Activated CD4-positive, alpha-beta T cell treated with anti-CD3 and anti-CD28 coated beads for 36 hours (primary cell): ENCODE measurements at regions of chr2 and their contacts with region 1.

Region 1: DNA sequence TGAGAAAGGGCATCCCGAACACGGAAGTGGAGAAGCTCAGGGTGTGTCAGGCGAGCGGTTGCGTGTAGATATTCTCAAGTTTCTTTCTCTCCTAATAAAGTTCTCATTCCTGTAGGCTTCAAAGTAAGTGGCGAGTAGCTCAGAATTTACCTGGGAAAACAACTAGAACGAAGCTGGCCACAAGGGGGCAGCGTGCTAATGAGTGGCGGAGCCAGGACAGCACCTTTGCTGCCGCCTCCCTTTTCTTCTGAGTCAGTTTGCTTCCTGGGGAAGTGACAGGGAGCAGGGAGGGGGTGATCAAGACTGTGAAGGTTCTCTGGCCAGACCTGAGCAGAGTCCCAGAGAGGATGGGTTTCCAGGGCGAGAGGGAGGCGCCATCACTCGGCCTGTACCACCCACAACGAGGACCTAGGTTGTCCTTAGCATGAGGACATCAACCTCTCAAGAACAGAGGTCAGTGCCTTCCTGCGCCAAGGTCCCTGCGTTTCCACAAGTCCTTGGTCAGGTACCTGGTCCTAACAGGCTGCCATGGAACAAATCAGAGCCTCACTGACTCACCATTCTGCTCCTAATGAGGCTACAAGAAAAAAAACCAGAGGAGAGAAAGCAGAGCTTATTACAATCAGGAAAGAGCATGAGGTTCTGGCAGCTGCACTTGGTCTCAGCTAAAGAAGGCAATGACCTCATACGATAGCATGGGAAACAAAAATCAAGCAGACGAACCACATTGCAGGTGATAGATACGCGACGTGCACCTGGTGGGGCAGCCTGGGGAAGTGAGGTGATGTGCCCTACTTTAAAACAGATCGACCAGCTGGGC is 98.6 kb downstream of the PLB1 start:
- DNase-seq: peak; percentile 93
- ATAC-seq: peak; percentile 90
- H3K4me3 Mint-ChIP-seq: peak overlapping the region; percentile 39
- H3K27ac Mint-ChIP-seq: peak overlapping the region; percentile 75
- H3K4me1 Mint-ChIP-seq: peaks cover 18% of the 10 kb centered on the region
- H3K27me3 Mint-ChIP-seq: no peaks in the 10 kb centered on the region

Region 2: GRCh38 chr2:28566521-28567041 is 27.9 kb before region 1 on chr2:
- CTCF ChIA-PET with region 1: interaction called, 25 read pairs
- POLR2A ChIA-PET with region 1: interaction called, 3 read pairs
- intact Hi-C with region 1: loop called in 1 of 2 experiments (anchors 1 kb)
- DNase-seq: peak; percentile 96
- ATAC-seq: peak; percentile 99
- H3K4me3 Mint-ChIP-seq: peak overlapping the region; percentile 81
- H3K27ac Mint-ChIP-seq: peak overlapping the region; percentile 87
- H3K4me1 Mint-ChIP-seq: peaks cover 18% of the 10 kb centered on the region
- H3K27me3 Mint-ChIP-seq: peaks cover 2% of the 10 kb centered on the region

Region 3: DNA sequence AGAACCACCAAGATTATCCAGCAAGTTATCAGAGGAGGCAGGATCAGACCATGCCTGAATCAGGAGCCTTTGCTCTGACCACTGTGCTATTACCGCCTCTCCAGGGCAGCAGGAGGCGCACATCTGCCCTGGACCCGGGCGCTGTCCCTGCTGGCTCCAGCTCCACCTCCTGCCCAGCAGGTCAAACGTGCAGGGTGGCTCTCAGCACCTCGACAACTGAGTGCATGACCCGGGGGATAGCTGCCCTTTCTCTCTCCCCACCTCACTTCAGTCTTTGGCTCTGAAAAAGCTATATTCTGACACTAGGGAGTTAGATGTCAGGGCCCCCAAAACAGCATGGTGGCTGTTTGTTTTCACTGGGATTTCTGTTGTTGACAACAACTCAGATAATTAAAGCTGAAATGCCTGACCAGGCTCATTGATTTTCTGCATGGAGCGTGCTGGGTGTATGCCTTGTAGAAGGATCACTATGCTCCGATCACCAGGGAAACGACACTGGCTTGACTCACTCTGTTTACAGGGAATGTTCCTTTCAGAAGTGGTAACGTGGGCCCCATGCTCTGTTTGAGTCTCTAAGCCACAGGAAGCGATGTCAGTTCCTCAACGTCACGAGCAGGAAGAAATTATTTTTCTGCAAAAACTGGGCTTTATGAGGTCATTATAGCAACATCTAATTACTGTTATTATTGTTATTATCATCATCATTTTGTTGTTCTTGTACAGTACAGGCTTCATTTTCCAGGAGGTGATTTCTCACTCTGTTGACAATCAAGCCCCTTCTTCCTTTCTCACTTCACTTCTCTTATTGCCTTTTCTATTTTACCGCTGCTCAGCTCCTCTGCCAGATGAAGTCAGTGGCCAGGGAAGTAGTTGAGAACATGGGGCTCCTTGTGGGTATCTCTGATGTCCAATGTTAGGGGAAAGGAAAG is 26.9 kb after region 1 on chr2:
- CTCF ChIA-PET with region 1: interaction called, 55 read pairs
- POLR2A ChIA-PET with region 1: no interaction called
- intact Hi-C with region 1: no loop called
- DNase-seq: peak; percentile 81
- ATAC-seq: peak; percentile 73
- H3K4me3 Mint-ChIP-seq: peak overlapping the region; percentile 49
- H3K27ac Mint-ChIP-seq: peak overlapping the region; percentile 96
- H3K4me1 Mint-ChIP-seq: peaks cover 95% of the 10 kb centered on the region
- H3K27me3 Mint-ChIP-seq: no peaks in the 10 kb centered on the region

Region 4: DNA sequence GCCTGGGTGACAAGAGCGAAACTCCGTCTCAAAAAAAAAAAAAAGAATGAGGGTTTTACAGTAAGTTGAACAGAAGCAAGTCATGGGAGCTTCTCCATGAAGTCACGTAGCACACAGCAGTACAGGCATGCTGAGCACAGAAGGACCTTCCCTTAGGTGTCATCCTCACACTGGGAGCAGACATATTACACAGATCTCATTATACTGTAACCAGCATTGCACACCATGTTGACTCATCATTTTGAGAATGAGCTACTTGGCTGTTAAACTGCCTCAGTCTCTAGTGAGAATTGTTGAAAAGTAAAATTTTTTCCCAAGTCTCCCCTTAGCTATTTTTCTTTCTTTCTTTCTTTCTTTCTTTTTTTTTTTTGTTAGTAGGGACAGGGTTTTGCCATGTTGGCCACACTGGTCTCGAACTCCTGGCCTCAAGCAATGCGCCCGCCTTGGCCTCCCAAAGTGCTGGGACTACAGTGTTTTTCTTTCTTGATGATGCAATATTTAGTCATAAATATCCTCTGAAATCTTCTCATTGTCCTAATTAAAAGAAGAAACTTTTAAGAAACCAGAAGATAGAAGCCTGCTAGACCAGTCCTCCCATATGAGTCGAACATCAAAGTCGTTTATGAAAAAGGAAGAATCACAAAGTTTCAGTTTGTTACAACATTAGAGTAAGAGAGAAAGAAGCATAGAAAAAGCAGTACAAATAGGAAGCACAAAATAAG is 119.2 kb after region 1 on chr2:
- CTCF ChIA-PET with region 1: interaction called, 13 read pairs
- POLR2A ChIA-PET with region 1: no interaction called
- intact Hi-C with region 1: no loop called
- DNase-seq: peak; percentile 22
- ATAC-seq: peak; percentile 91
- H3K4me3 Mint-ChIP-seq: no peak overlapping the region
- H3K27ac Mint-ChIP-seq: peak overlapping the region; percentile 89
- H3K4me1 Mint-ChIP-seq: peaks cover 22% of the 10 kb centered on the region
- H3K27me3 Mint-ChIP-seq: no peaks in the 10 kb centered on the region

Region 5: GRCh38 chr2:28767337-28768084 is 173.0 kb after region 1 on chr2:
- CTCF ChIA-PET with region 1: interaction called, 13 read pairs
- POLR2A ChIA-PET with region 1: no interaction called
- intact Hi-C with region 1: no loop called
- DNase-seq: no peak
- ATAC-seq: no peak
- H3K4me3 Mint-ChIP-seq: no peak overlapping the region
- H3K27ac Mint-ChIP-seq: peak overlapping the region; percentile 37
- H3K4me1 Mint-ChIP-seq: peaks cover 84% of the 10 kb centered on the region
- H3K27me3 Mint-ChIP-seq: no peaks in the 10 kb centered on the region

Region 6: DNA sequence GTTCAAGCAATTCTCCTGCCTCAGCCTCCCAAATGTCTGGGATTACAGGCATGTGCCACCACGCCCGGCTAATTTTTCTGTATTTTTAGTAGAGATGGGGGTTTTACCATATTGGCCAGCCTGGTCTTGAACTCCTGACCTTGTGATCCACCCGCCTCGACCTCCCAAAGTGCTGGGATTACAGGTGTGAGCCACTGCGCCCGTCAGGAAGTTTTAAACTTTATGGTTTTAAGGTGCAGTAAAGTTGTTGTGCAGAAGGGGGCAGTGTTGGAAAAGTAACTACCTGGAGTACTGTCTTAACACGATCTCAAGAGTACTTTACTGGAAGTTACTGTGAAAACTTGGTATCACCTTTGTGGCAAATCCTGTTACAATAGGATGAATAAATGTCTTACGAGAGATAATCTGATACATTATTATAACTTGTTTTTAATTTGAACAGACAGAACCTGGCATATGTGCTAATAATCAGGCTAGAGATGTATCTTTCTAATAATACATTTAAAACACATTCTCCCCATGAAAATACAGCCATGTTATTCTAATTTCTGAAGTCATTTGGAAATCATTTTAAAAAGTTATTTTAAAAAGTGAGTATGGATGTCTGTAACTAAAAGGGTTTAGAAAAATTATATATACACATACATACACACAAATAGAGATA is 226.9 kb after region 1 on chr2:
- CTCF ChIA-PET with region 1: interaction called, 15 read pairs
- POLR2A ChIA-PET with region 1: no interaction called
- intact Hi-C with region 1: no loop called
- DNase-seq: peak; percentile 72
- ATAC-seq: peak; percentile 88
- H3K4me3 Mint-ChIP-seq: no peak overlapping the region
- H3K27ac Mint-ChIP-seq: no peak overlapping the region
- H3K4me1 Mint-ChIP-seq: peaks cover 7% of the 10 kb centered on the region
- H3K27me3 Mint-ChIP-seq: peaks cover 2% of the 10 kb centered on the region